Heart left ventricle (tissue), 16 donors: ENCODE measurements at regions of chr9 and their contacts with region 1.

Region 1: DNA sequence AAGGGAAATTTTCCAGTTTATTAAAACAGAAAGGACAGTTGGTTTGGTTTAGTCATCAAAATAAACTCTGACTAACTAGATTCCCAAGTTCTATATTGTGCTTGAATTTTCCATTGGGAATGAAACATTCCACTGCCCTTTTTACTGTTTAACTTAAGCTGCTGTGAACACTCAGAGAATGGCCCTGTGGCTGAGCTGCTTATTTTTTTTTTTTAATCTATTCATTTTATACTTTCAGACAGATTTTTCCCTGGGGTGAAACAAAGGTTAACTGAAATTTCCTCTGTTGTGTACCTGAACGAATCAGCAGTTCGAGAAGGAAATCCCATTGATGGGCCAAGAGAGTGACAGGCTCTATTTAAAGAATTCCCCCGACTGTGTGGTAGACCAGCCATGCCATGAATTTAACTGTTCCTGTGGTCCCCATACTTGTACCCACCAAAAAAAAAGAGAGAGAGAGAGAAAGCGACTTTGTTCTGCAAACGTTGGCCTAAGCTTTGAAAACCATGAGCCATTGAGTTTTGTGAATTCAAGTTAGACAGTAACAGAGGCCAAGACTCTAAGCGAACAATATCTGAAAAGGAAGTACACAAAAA is 138.7 kb upstream of the GRHPR start:
- DNase-seq: no peak
- ATAC-seq: no peak
- H3K4me3 ChIP-seq: no peak overlapping the region
- H3K27ac ChIP-seq: no peak overlapping the region
- H3K4me1 ChIP-seq: peaks cover 0 to 15% (median 0%) of the 10 kb centered on the region in 12 donors
- H3K27me3 ChIP-seq: no peaks in the 10 kb centered on the region
- CTCF ChIP-seq: no peak
- POLR2A ChIP-seq: no peak

Region 2: GRCh38 chr9:37339923-37340322 is 56.1 kb after region 1 on chr9:
- intact Hi-C with region 1: loop called in 1 of 10 experiments (anchors 10 kb)
- DNase-seq: no peak
- ATAC-seq: no peak
- H3K4me3 ChIP-seq: no peak overlapping the region
- H3K27ac ChIP-seq: no peak overlapping the region
- H3K4me1 ChIP-seq: no peaks in the 10 kb centered on the region
- H3K27me3 ChIP-seq: no peaks in the 10 kb centered on the region
- CTCF ChIP-seq: no peak
- POLR2A ChIP-seq: no peak